ENCODE measurements at regions of chr10 and their contacts with region 1.

Region 1: DNA sequence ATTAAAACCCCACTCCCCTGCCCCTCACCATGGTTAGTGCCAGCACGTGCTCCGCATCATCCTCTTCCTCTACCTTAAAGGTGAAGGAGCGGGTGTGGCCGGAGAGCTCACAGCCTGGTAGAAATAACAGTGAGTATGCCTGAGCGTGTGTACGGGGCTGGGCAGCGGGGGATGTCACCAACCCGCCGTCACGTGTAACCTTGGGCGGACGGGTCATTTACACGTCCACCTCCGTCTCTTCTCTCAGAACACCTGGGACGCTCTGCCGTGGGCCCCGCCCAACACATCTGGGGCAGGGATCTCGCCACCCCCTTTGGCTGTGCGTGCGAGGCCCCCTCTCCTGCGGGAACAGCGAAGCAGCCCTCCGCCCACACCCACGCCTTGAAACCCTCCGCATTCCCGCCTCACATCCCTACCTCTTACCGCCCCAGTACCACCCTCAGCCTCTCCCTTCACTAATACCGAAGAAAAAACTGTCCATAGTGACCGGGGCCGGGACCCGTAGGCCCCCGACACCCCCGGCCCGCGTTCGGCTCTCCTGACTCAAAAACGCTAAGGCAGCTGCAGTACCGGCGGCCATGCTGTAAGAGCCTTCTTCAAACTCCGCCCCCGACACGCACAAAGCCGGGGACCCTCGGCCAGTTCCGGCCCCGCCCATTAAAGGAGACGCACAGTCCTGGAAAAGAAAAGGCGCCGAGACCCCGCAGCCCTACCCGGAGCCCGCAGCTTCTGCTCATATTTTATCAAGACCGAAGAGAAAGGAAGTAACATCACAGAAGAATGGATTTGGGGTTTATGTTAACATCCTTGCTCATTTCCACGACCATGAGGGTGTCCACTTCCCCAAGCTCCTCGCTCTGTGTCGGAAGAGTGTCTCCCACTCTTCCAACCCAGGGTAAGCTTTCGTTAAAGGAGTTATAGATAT is at the start of gene NPM3:
- DNase-seq: peak; percentile 96
- ATAC-seq: peak; percentile 85
- H3K4me3 Mint-ChIP-seq: peak within 1 kb of the TSS; percentile 94
- H3K27ac Mint-ChIP-seq: peak within 1 kb of the TSS; percentile 95
- H3K4me1 Mint-ChIP-seq: peaks cover 42% of the 10 kb centered on the region
- H3K27me3 Mint-ChIP-seq: peaks cover 5% of the 10 kb centered on the region
- CTCF ChIP-seq: no peak
- total RNA-seq, gene NPM3: 235 to 264 TPM

Region 2: DNA sequence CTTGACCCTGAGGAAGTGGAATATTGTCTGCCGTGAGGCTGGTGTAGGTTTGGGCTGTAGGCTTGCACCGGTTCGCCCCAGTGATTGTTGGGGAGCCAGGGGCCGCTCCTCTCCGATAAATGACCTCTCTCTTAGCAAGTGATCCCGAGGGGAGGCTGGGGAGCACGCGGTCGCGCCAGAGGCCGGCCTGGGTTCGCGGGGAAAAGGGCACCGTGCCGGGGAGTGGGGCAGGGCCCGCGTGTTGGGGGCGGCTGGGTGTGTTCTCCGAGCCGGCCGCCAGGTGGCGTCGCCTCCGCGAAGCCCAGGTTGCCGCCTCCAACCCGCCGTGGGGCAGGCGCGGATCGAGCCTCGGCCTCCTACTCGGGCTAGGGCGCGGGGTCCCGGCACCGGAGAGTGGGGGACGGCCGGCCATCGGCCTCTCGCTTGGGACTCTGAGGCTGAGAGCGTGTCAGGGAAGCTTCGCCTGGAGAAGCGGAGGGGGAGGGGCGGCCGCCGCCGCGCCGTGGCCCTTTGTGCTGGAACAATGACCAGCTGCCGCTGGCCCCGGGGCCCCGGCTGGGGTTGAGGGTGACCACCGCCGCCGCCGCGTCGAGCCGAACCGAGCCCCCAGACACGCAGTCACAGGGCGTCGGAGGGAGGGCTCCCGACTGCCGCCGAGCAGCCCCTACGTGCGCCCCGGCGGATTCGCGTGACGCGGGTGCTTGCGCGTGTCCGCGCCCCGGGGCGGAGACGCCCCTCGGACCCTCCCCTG is 783.9 kb before region 1 on chr10:
- CTCF ChIA-PET with region 1: no interaction called
- POLR2A ChIA-PET with region 1: no interaction called
- intact Hi-C with region 1: no loop called
- DNase-seq: peak; percentile 78
- ATAC-seq: peak; percentile 64
- H3K4me3 Mint-ChIP-seq: peak overlapping the region; percentile 78
- H3K27ac Mint-ChIP-seq: peak overlapping the region; percentile 88
- H3K4me1 Mint-ChIP-seq: peaks cover 20% of the 10 kb centered on the region
- H3K27me3 Mint-ChIP-seq: no peaks in the 10 kb centered on the region
- CTCF ChIP-seq: peak; percentile 99

Region 3: DNA sequence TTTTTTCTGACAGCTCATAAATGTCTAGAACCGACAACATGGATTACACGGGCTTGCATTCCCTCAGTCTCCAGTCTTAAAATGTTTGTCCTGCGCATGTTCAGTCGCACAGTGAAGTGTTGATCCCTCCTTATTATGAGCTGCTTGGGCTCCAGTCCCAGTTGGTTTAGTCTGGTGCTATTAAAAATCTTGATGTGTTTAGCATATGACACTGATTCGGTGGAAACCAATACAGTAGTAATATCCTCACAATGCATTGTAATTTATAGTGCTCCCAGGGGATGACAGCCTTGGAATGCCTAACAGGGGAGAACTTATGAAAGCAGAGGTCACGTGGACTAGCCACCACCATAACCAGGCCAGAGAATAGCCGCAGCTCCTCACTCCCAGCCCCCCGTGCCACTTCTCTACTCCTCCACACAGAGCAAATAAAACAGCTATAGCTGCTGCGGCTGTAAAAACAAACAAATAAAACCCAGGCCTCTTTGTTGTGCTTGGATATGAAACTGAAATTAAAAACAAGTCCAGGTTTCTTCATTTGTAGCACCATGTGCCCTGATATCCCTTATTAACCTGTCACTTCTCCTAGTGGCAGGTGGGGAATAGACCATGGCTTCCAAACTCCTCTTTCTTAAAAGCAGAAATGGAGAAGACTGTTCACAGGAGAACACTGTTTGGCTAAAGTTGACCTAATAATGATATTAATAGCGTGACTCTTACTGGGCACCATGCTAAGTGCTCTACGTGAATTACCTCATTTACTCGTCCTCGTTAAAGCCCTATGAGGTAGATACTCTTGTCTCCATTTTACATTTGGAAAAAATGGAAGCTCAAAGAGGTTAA is 187.3 kb before region 1 on chr10:
- CTCF ChIA-PET with region 1: interaction called, 180 read pairs
- POLR2A ChIA-PET with region 1: no interaction called
- intact Hi-C with region 1: no loop called
- DNase-seq: no peak
- ATAC-seq: no peak
- H3K4me3 Mint-ChIP-seq: no peak overlapping the region
- H3K27ac Mint-ChIP-seq: no peak overlapping the region
- H3K4me1 Mint-ChIP-seq: no peaks in the 10 kb centered on the region
- H3K27me3 Mint-ChIP-seq: no peaks in the 10 kb centered on the region
- CTCF ChIP-seq: no peak

Region 4: DNA sequence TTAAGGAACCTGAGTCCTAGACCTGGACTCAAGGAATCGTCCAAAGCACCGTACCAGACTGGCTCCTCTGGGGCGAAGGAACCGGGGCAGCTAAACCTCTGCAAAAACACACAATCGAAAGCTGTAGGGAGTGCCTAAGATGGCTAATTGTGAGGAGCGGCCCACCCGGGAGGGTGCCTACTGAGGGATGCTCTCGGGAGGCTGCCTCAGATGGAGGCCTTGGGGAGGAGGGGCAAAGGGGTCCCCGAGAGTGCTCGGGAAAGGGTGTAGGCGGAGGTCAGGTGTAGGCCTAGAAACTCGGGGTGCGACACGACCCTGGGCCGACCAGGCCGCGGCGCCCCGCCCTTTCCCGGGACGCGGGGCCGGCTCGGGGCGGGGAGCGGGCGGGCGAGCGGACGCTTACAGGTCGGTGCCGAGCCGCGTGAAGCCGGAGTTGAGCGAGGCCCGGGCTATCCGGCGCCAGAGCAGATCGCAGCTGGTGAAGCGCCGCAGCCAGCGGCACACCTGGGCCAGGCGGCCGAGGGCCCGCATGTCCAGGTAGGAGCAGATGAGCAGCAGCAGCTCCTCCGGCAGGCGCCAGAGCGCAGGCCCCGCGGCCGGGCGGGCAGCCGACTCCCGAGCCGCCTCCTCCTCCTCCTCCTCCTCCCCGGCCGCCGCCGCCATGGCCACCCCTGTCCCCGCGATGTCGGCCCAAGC is 88.9 kb before region 1 on chr10:
- CTCF ChIA-PET with region 1: interaction called, 18 read pairs
- POLR2A ChIA-PET with region 1: interaction called, 4 read pairs
- intact Hi-C with region 1: no loop called
- DNase-seq: peak; percentile 67
- ATAC-seq: peak; percentile 75
- H3K4me3 Mint-ChIP-seq: peak overlapping the region; percentile 97
- H3K27ac Mint-ChIP-seq: peak overlapping the region; percentile 98
- H3K4me1 Mint-ChIP-seq: peaks cover 43% of the 10 kb centered on the region
- H3K27me3 Mint-ChIP-seq: no peaks in the 10 kb centered on the region
- CTCF ChIP-seq: no peak

Region 5: DNA sequence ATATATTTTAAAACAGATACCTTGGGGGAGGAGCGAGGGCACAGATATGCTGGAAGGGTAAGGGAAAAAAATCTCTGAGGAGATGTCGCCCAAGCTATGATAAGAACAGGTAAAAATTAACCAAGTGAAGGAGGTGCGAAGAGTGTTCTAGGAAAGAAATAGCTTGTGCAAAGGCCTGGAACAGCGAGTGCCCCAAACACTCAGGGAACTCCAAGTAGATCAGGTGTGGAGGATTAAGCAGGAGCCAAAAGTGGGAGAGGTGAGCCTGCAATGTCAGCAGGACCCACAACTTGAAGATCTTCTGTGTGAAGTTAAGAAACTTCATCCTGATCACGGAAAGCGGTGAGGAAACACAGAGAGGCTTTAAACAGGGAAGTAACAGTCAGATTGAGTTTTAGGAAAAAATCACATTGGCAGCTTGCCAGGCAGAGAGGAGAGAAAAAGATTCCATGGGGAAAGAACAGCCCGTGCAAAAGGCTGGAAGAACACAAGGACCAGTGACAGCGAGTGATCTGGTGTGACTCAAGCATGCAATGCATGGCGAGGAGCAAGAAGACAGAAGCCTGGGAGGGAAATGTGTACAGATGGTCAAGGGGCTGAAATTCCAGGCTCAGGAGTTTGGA is 37.9 kb before region 1 on chr10:
- CTCF ChIA-PET with region 1: no interaction called
- POLR2A ChIA-PET with region 1: no interaction called
- intact Hi-C with region 1: no loop called
- DNase-seq: no peak
- ATAC-seq: no peak
- H3K4me3 Mint-ChIP-seq: no peak overlapping the region
- H3K27ac Mint-ChIP-seq: no peak overlapping the region
- H3K4me1 Mint-ChIP-seq: no peaks in the 10 kb centered on the region
- H3K27me3 Mint-ChIP-seq: peaks cover 4% of the 10 kb centered on the region
- CTCF ChIP-seq: no peak

Region 6: DNA sequence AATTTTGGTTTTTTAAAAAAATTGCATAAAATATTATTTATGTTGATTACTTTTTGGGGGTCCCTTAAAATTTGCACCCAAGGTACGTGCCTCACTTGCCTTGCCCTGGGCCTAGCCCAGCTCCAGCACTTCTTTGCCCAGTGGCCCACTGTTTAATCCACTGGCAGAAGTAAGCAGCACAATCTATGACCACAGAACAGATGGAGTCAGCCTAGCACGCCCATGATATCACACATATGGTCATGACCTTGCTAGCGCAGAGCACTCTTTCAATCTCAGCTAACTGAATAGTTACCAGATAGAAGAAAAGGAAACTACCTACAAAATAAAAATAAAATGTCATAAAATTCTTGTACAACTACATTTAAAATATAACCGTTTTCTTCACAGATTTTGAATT is 29.5 kb after region 1 on chr10:
- CTCF ChIA-PET with region 1: interaction called, 12 read pairs
- POLR2A ChIA-PET with region 1: interaction called, 53 read pairs
- intact Hi-C with region 1: loop called (anchors 5 kb)
- DNase-seq: no peak
- ATAC-seq: no peak
- H3K4me3 Mint-ChIP-seq: no peak overlapping the region
- H3K27ac Mint-ChIP-seq: peak overlapping the region; percentile 55
- H3K4me1 Mint-ChIP-seq: peaks cover 51% of the 10 kb centered on the region
- H3K27me3 Mint-ChIP-seq: no peaks in the 10 kb centered on the region
- CTCF ChIP-seq: no peak